ENCODE measurements at regions of chr6 and their contacts with region 1.

Region 1: GRCh38 chr6:90251295-90251992 is 45.2 kb downstream of the BACH2 start:
- DNase-seq: no peak
- H3K4me3 Mint-ChIP-seq: no peak overlapping the region
- H3K27ac Mint-ChIP-seq: peak overlapping the region; percentile 83
- H3K4me1 Mint-ChIP-seq: peaks cover 80% of the 10 kb centered on the region
- H3K27me3 Mint-ChIP-seq: no peaks in the 10 kb centered on the region

Region 2: DNA sequence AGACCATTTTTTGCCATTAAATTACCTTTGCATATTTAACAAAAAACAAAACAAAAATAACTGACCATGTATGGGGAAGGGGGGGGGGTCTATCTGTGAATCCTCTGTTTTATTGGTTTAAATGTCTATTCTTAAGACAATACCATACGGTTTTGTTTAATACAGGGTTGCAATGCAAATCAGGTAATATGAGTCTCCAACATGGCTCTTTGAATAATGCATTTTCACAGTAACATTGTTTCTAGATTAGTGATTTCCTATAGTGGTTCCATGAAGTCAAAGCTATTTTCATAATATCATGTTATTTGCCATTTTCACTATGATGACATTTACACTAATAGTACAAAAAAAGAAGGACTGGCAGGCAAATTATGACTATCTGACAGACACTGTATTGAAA is 548.2 kb before region 1 on chr6:
- CTCF ChIA-PET with region 1: no interaction called
- POLR2A ChIA-PET with region 1: no interaction called
- intact Hi-C with region 1: no loop called
- DNase-seq: no peak
- H3K4me3 Mint-ChIP-seq: no peak overlapping the region
- H3K27ac Mint-ChIP-seq: no peak overlapping the region
- H3K4me1 Mint-ChIP-seq: no peaks in the 10 kb centered on the region
- H3K27me3 Mint-ChIP-seq: no peaks in the 10 kb centered on the region

Region 3: DNA sequence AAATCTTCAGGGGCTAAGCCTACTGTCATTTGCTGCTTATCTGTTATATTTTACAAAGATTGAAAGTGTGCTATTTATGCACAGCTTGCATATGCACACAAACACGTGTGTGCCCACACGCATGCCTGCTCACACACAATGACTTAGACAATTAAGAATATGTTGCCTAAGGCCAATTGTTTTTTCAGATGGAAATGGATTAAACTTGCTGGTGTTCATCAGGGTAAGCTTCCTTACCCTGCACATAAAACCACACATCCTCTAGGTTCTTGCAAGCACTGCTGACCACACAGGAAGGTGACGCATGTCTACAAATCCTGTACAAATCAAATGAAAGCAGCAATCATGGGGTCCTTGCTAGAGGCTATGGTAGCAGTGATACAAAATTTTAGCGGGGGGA is 298.8 kb before region 1 on chr6:
- CTCF ChIA-PET with region 1: no interaction called
- POLR2A ChIA-PET with region 1: interaction called, 3 read pairs
- intact Hi-C with region 1: loop called (anchors 1 kb)
- DNase-seq: peak; percentile 72
- H3K4me3 Mint-ChIP-seq: peak overlapping the region; percentile 8
- H3K27ac Mint-ChIP-seq: peak overlapping the region; percentile 69
- H3K4me1 Mint-ChIP-seq: peaks cover 68% of the 10 kb centered on the region
- H3K27me3 Mint-ChIP-seq: no peaks in the 10 kb centered on the region

Region 4: GRCh38 chr6:90025523-90026061 is 225.9 kb before region 1 on chr6:
- CTCF ChIA-PET with region 1: no interaction called
- POLR2A ChIA-PET with region 1: no interaction called
- intact Hi-C with region 1: loop called (anchors 5 kb)
- DNase-seq: peak; percentile 77
- H3K4me3 Mint-ChIP-seq: peak overlapping the region; percentile 27
- H3K27ac Mint-ChIP-seq: peak overlapping the region; percentile 67
- H3K4me1 Mint-ChIP-seq: peaks cover 77% of the 10 kb centered on the region
- H3K27me3 Mint-ChIP-seq: no peaks in the 10 kb centered on the region

Region 5: DNA sequence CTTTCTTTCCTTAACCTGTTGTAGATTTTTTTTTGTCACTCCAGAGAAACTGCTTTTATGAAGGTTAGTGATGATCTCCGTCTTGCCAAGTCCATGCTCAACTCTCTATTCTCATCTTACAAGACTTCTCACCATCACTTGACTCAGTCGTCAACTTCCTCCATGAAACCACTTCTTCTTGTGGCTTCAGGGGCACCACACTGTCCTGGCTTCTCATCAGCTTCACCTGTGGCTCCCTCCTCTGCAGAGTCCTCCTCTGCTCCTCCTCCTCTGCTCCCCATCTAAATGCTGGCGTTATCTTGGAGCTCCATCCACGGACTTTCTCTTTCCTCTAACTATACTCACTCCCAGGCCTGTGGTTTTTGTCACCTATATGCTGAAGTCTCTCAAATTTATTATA is 142.3 kb before region 1 on chr6:
- CTCF ChIA-PET with region 1: no interaction called
- POLR2A ChIA-PET with region 1: no interaction called
- intact Hi-C with region 1: loop called (anchors 1 kb)
- DNase-seq: peak; percentile 58
- H3K4me3 Mint-ChIP-seq: peak overlapping the region; percentile 11
- H3K27ac Mint-ChIP-seq: peak overlapping the region; percentile 30
- H3K4me1 Mint-ChIP-seq: peaks cover 83% of the 10 kb centered on the region
- H3K27me3 Mint-ChIP-seq: peaks cover 8% of the 10 kb centered on the region

Region 6: DNA sequence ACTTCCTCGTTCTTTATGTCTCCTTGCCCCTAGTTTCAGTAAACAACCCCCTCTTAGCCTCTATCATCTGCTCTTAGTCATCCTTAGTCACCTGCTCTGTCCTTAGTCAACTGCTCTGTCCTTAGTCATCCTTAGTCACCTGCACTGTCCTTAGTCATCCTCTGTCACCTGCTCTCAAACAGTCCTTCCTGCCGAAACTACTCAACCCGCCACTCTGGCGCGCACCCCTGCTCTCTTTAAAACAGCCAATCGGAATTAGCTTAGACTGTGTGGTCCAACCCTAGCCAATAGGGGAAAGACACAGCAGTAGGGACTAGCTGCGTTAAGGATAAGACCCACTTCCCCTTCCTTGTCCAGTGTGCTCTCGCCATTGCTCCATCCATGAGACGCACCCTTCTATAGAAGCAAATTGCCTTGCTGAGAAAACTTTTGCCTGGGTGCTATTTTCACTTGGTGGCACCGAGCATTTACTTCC is 28.7 kb before region 1 on chr6:
- CTCF ChIA-PET with region 1: interaction called, 4 read pairs
- POLR2A ChIA-PET with region 1: interaction called, 5 read pairs
- intact Hi-C with region 1: loop called (anchors 1 kb)
- DNase-seq: peak; percentile 71
- H3K4me3 Mint-ChIP-seq: no peak overlapping the region
- H3K27ac Mint-ChIP-seq: peak overlapping the region; percentile 43
- H3K4me1 Mint-ChIP-seq: peaks cover 54% of the 10 kb centered on the region
- H3K27me3 Mint-ChIP-seq: no peaks in the 10 kb centered on the region

Region 7: GRCh38 chr6:90238496-90239266 is 12.8 kb before region 1 on chr6:
- CTCF ChIA-PET with region 1: interaction called, 3 read pairs
- POLR2A ChIA-PET with region 1: interaction called, 4 read pairs
- intact Hi-C with region 1: loop called (anchors 1 kb)
- DNase-seq: no peak
- H3K4me3 Mint-ChIP-seq: no peak overlapping the region
- H3K27ac Mint-ChIP-seq: peak overlapping the region; percentile 36
- H3K4me1 Mint-ChIP-seq: peaks cover 62% of the 10 kb centered on the region
- H3K27me3 Mint-ChIP-seq: no peaks in the 10 kb centered on the region

Region 8: GRCh38 chr6:90413867-90414266 is 162.4 kb after region 1 on chr6:
- CTCF ChIA-PET with region 1: no interaction called
- POLR2A ChIA-PET with region 1: no interaction called
- intact Hi-C with region 1: loop called (anchors 1 kb)
- DNase-seq: peak; percentile 92
- H3K4me3 Mint-ChIP-seq: peak overlapping the region; percentile 64
- H3K27ac Mint-ChIP-seq: peak overlapping the region; percentile 93
- H3K4me1 Mint-ChIP-seq: peaks cover 71% of the 10 kb centered on the region
- H3K27me3 Mint-ChIP-seq: no peaks in the 10 kb centered on the region